Activated B cell treated with CpG ODN at 0.5 μM for 24 hours (primary cell): ENCODE measurements at regions of chr12 and their contacts with region 1.

Region 1: DNA sequence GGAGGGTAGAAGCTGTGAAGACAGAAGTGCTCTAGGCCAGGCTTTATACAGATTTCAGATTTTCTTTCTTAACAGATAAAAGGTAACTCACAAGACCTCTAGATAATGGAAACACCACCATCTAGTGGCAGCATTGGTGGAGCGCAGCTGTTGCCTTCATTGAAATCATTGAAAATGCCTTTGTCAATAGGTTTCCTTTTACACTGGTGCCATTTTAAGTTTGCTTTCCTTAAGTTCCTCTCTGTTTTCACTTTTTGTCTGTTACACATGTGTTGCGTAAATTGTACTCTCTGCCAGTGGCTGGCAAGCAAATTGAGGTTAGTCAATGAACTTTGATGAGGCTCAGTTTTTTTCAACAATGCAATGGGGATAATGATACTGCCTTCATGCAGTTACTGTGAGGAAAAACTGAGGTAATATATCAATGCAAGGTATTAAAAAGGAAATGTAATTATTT is 31.1 kb downstream of the ALDH1L2 start:
- DNase-seq: peak; percentile 36
- ATAC-seq: peak; percentile 91
- H3K4me3 Mint-ChIP-seq: no peak overlapping the region
- H3K27ac Mint-ChIP-seq: no peak overlapping the region
- H3K4me1 Mint-ChIP-seq: peaks cover 17% of the 10 kb centered on the region
- H3K27me3 Mint-ChIP-seq: no peaks in the 10 kb centered on the region
- CTCF ChIP-seq: peak; percentile 96

Region 2: GRCh38 chr12:104201238-104202001 is 851.7 kb before region 1 on chr12:
- CTCF ChIA-PET with region 1: interaction called, 5 read pairs
- POLR2A ChIA-PET with region 1: no interaction called
- intact Hi-C with region 1: loop called (anchors 1 kb)
- DNase-seq: peak; percentile 20
- ATAC-seq: peak; percentile 62
- H3K4me3 Mint-ChIP-seq: no peak overlapping the region
- H3K27ac Mint-ChIP-seq: no peak overlapping the region
- H3K4me1 Mint-ChIP-seq: peaks cover 2% of the 10 kb centered on the region
- H3K27me3 Mint-ChIP-seq: peaks cover 12% of the 10 kb centered on the region
- CTCF ChIP-seq: peak; percentile 31

Region 3: DNA sequence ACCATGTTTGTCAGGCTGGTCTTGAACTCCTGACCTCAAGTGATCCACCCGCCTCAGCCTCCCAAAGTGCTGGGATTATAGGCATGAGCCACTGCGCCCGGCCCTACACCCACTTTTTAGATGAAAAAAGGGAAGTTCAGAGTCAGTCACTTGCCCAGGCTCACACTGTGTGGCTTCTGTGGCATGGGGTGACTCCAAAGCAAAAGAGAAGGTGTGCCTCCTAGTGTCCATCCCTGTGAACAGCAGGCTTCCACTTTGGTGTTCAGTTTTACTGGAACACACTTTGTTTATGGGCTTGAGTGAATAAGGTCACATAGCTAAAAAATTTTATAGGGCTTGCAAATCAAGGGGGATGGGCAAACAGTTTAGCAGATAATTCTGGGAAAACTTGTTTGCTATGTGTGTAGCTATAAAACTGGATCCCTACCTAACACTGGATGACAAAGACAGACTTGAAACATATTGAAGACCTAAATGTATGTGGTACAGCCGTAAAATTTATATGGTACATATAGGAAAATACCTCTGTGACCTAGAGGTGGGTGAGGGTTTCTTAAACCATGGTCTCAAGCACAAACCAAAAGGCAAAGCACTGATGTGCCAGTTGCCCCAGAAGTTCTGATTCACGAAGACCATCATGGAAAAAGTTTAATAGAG is 694.7 kb before region 1 on chr12:
- CTCF ChIA-PET with region 1: interaction called, 5 read pairs
- POLR2A ChIA-PET with region 1: no interaction called
- intact Hi-C with region 1: loop called (anchors 1 kb)
- DNase-seq: peak; percentile 35
- ATAC-seq: peak; percentile 98
- H3K4me3 Mint-ChIP-seq: no peak overlapping the region
- H3K27ac Mint-ChIP-seq: peak overlapping the region; percentile 8
- H3K4me1 Mint-ChIP-seq: no peaks in the 10 kb centered on the region
- H3K27me3 Mint-ChIP-seq: no peaks in the 10 kb centered on the region
- CTCF ChIP-seq: no peak

Region 4: GRCh38 chr12:104720339-104721038 is 332.7 kb before region 1 on chr12:
- CTCF ChIA-PET with region 1: no interaction called
- POLR2A ChIA-PET with region 1: interaction called, 3 read pairs
- intact Hi-C with region 1: loop called (anchors 5 kb)
- DNase-seq: peak; percentile 27
- ATAC-seq: peak; percentile 57
- H3K4me3 Mint-ChIP-seq: peak overlapping the region; percentile 75
- H3K27ac Mint-ChIP-seq: peak overlapping the region; percentile 77
- H3K4me1 Mint-ChIP-seq: peaks cover 62% of the 10 kb centered on the region
- H3K27me3 Mint-ChIP-seq: no peaks in the 10 kb centered on the region
- CTCF ChIP-seq: no peak

Region 5: GRCh38 chr12:104790296-104791125 is 262.6 kb before region 1 on chr12:
- CTCF ChIA-PET with region 1: no interaction called
- POLR2A ChIA-PET with region 1: no interaction called
- intact Hi-C with region 1: loop called (anchors 5 kb)
- DNase-seq: peak; percentile 40
- ATAC-seq: peak; percentile 76
- H3K4me3 Mint-ChIP-seq: peak overlapping the region; percentile 76
- H3K27ac Mint-ChIP-seq: no peak overlapping the region
- H3K4me1 Mint-ChIP-seq: peaks cover 7% of the 10 kb centered on the region
- H3K27me3 Mint-ChIP-seq: no peaks in the 10 kb centered on the region
- CTCF ChIP-seq: peak; percentile 21

Region 6: DNA sequence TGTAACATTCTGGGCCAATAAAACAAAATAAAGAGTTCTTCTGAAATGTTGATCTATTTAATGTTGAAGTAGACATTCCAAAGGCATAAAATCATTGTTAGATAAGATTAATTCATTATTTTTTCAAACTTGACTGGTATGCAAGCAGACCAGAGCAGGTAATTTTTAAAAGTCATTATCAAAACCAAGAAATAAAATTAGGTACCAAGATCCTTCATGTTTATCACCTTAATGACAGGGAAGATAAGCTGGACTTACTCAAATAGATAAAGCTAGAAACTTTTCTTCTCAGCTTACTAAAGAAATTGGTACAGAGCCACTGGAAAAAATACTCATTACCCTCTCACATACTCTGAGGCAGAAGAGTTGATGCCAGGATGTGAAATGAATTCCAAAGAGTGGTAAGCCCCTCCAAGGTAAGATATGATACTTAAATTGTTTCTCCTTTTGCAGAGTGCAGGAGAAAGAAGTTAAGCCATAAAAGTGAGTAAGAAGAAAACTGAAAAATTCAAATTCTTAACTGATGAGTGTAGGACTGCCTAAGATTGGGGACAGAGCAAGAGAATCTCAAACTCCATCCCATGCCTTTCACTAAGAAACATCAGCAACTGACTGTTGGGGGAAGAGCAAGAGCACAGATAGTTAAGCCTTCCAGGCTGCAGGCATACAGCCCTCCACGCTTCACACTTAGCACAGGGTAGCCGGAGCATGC is 206.9 kb before region 1 on chr12:
- CTCF ChIA-PET with region 1: no interaction called
- POLR2A ChIA-PET with region 1: no interaction called
- intact Hi-C with region 1: no loop called
- DNase-seq: no peak
- ATAC-seq: no peak
- H3K4me3 Mint-ChIP-seq: no peak overlapping the region
- H3K27ac Mint-ChIP-seq: no peak overlapping the region
- H3K4me1 Mint-ChIP-seq: no peaks in the 10 kb centered on the region
- H3K27me3 Mint-ChIP-seq: no peaks in the 10 kb centered on the region
- CTCF ChIP-seq: no peak

Region 7: DNA sequence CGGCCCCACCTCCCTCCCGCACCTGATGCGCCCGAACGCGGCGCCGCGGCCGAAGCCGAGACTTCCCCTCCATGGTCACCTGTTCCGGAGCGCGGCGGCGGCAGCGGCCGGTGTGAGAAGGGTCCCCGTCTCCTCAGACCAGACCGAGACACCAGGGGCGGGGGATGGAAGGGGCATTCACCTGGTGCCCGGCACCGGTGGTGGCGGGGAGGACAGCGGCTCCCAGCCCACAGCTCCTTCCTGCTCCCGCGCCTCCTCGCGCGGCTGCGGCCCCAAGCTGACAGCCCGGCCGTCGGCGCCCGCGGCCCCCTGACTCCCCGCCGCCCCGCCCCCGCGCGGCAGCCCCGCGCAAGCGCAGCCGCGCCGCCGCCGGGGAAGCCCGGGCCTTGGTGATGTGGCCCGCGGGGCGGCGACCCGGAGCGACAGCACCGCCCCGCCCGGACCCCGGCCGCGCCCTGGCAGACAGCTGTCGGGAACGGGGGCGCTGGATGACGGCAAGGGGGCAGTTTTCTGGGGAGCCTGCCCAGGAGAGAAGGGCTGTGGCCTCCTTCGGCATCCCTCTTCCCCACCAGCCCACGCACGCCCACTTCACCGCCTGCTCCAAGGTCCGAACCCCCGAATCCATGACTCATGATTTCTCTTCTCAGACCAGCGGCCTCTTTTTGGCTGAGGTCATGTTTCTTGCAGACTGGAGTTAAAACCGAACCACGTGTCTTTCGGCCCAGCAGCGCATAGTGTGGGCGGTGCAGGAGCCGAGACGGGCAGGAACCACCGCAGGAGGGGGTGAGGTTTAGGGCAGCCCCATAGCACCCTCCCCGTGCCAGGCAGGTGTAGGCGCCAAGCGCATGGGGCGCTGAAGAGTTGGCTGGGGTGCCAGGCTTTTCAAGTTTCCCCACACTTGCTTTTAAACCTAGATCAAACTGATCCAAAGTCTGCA is 94.9 kb before region 1 on chr12 and contains the start of gene SLC41A2:
- CTCF ChIA-PET with region 1: interaction called, 3 read pairs
- POLR2A ChIA-PET with region 1: no interaction called
- intact Hi-C with region 1: loop called (anchors 1 kb)
- DNase-seq: peak; percentile 90
- ATAC-seq: peak; percentile 86
- H3K4me3 Mint-ChIP-seq: peak within 1 kb of the TSS; percentile 93
- H3K27ac Mint-ChIP-seq: peak within 1 kb of the TSS; percentile 92
- H3K4me1 Mint-ChIP-seq: peaks cover 26% of the 10 kb centered on the region
- H3K27me3 Mint-ChIP-seq: peaks cover 2% of the 10 kb centered on the region
- CTCF ChIP-seq: no peak
- total RNA-seq, gene SLC41A2: 11.1 and 12.6 TPM in 2 replicates

Region 8: GRCh38 chr12:105141320-105141918 is 88.3 kb after region 1 on chr12:
- CTCF ChIA-PET with region 1: no interaction called
- POLR2A ChIA-PET with region 1: no interaction called
- intact Hi-C with region 1: no loop called
- DNase-seq: no peak
- ATAC-seq: no peak
- H3K4me3 Mint-ChIP-seq: no peak overlapping the region
- H3K27ac Mint-ChIP-seq: no peak overlapping the region
- H3K4me1 Mint-ChIP-seq: peaks cover 9% of the 10 kb centered on the region
- H3K27me3 Mint-ChIP-seq: no peaks in the 10 kb centered on the region
- CTCF ChIP-seq: no peak

Region 9: DNA sequence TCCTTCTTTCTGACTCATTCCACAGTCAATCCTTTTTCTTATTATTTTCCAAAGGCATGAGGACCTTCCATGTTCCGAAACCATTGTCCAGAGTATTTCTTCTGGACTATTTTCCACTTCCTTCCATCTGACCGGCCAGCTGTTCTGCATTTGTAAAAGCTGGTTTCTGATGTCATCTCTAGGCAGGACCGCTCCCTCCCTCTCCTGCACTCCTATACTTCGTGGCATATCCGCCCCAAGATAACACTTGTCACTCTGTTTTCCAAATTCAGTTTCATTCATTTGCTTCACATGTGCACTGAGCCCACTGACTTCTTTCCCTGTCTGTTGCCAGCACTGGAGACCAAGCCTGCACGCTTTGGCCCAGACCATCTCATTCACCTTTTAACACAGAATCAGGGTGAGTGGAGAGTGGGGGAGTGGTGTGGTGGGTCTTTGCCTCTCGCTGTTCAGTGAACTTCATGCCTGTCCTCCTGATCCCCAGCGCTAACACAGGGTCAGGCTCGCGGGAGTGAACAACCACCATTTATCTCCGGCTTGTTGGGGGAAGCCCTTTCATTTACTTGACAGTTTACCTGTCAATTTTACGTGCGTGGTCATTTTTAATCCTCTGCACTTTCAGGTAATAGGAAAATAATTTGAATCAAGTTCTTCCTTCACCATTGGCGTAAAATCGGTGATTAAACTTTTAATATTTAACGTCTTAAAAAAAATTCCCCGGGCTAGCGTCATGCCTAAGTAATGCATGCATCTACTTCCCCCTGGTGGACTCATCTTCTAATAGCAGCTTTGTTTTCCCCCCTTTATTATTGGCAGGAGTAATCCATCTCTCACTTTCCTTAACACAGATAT is 329.9 kb after region 1 on chr12:
- CTCF ChIA-PET with region 1: no interaction called
- POLR2A ChIA-PET with region 1: no interaction called
- intact Hi-C with region 1: loop called (anchors 5 kb)
- DNase-seq: no peak
- ATAC-seq: peak; percentile 77
- H3K4me3 Mint-ChIP-seq: no peak overlapping the region
- H3K27ac Mint-ChIP-seq: no peak overlapping the region
- H3K4me1 Mint-ChIP-seq: no peaks in the 10 kb centered on the region
- H3K27me3 Mint-ChIP-seq: no peaks in the 10 kb centered on the region
- CTCF ChIP-seq: no peak